ENCODE measurements at regions of chr6 and their contacts with region 1.

Region 1: GRCh38 chr6:41787219-41787917 is at the start of gene TOMM6:
- DNase-seq: peak; percentile 98
- total RNA-seq, gene TOMM6: 127 TPM

Region 2: GRCh38 chr6:41884957-41885356 is 97.6 kb after region 1 on chr6:
- intact Hi-C with region 1: no loop called
- DNase-seq: no peak

Region 3: GRCh38 chr6:41895300-41896233 is 108.2 kb after region 1 on chr6 and contains the start of gene USP49:
- intact Hi-C with region 1: loop called (anchors 5 kb)
- DNase-seq: peak; percentile 94
- total RNA-seq, gene USP49: 1.7 TPM

Region 4: GRCh38 chr6:41920921-41921711 is 133.7 kb after region 1 on chr6 and contains the starts of genes BYSL and MED20:
- intact Hi-C with region 1: loop called (anchors 1 kb)
- DNase-seq: peak; percentile 97
- total RNA-seq, gene BYSL: 11.3 TPM
- total RNA-seq, gene MED20: 16.5 TPM

Region 5: DNA sequence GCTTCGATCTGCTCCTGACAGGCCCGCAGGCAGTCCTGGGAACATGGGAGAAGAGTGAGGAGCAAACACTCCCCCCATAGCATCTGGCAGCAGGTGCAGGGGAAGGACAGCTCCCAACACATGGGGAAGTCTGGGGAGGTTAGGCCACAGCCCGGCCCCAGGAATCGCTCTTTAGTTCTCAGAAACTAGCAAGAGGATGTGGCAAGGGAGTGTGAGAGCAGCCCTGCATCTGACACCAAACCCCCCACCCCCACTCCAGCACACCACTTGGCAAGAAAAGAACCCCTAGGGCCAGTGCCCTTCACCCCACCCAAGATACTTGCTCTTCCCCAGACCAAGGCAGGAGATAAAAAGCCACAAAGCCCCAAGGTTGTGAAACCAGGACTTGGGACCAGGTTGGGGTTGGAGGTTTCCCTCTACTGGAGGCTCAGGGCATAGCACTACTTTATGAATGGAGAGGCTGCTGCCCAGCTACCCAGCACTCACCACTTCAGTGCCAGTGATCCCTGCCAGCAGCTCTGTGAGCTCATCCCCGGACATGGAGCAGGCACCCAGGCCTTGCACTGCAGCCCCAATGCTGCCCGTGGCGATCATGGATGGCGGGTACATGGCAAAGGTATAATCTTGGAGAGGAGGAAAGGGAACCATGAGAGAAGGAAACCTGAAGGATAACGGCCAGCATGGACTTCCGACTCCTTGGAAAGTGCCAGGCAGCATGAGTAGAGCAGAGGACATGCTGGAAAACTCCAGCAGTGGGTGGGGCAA is 148.9 kb after region 1 on chr6:
- intact Hi-C with region 1: loop called (anchors 5 kb)
- DNase-seq: peak; percentile 88

Region 6: GRCh38 chr6:42050266-42051032 is 263.1 kb after region 1 on chr6 and contains the start of gene TAF8:
- intact Hi-C with region 1: loop called (anchors 1 kb)
- DNase-seq: peak; percentile 95
- total RNA-seq, gene TAF8: 22.3 TPM

Region 7: DNA sequence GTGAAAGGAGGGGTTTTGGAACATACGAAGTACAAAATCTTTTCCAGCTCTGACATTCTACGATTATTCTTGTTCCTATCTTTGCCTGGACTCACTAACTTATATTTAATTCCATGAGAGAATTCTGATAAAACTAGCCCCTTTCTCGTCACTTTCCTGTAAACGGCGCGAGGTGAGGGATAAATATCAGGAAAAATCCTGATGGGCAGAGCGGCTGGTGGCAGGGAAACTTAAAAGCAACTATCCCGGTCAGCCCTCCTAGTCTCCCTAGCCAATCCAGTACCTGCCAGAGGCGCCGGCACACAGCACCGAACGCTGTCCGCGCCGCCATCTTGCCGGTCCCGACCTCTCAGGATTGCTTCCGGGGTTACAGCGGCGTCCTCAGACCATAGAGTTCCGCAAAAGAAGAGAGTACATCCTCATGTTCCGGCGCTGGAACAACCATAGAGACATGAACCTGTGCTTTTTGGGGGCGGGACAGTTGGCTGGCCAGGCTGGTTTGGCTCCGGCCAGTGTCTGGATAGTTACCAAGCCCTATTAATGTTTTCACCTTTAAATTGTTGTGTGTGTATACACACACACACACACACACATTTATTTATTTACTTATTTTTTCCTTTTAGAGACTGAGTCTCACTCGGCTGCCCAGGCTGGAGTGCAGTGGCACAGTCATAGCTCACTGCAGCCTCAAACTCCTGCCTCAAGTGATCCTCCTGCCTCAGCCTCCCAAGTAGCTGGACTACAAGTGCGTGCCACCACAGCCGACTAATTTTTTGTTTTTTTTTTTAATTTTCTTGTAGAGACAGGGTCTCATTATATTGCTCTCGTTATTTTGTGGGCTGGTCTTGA is 430.4 kb after region 1 on chr6 and contains the start of gene MRPS10:
- intact Hi-C with region 1: loop called (anchors 1 kb)
- DNase-seq: peak; percentile 97
- total RNA-seq, gene MRPS10: 54.9 TPM